Naive thymus-derived CD4-positive, alpha-beta T cell (primary cell): ENCODE measurements at regions of chr6 and their contacts with region 1.

Region 1: DNA sequence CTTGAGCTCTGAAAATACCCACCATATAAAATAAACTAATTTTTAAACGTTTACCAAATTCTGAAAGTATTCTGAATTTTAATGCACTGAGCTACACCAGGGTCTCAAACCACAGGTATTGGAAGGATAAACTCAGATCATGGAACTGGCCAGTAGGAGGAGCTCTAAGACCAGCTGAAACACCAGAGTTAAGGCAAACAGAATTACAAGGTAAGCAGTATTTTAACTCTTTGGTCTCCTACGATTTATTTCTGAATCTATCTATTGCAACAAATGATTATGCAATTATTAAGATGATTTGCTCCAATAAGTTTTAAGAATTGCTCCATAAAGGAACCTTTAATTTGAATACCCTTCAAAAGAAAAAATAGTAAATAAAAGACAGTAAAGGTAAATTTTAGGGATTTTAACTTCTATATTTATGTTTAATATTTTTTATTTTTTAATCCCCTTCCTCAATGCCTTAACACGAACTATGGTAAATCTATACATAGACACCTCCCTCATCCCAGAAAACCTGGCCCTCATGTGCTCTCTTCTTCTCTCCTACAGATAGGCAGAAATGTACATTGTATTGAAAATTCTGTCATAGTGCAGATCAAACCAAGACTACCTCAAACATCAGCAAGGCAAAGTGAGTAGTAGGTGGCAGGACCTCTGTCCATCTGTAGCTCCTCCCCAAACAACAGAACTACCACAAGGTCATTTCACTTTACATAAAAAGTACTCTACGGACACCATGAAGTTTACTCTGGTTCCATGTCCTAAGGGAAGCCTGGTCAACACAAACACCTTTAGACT is 58.4 kb downstream of the SMLR1 start:
- DNase-seq: peak; percentile 27 to 82 (median 73)
- ATAC-seq: peak; percentile 97
- H3K4me3 ChIP-seq: no peak overlapping the region
- H3K4me3 Mint-ChIP-seq: no peak overlapping the region
- H3K27ac ChIP-seq: no peak overlapping the region
- H3K27ac Mint-ChIP-seq: peak overlapping the region in 1 of 9 donors; percentile 3
- H3K4me1 ChIP-seq: no peaks in the 10 kb centered on the region
- H3K4me1 Mint-ChIP-seq: no peaks in the 10 kb centered on the region
- H3K27me3 ChIP-seq: no peaks in the 10 kb centered on the region
- H3K27me3 Mint-ChIP-seq: no peaks in the 10 kb centered on the region

Region 2: GRCh38 chr6:131063028-131063763 is 177.6 kb after region 1 on chr6 and contains the start of gene EPB41L2:
- CTCF ChIA-PET with region 1: interaction called, 3 read pairs
- POLR2A ChIA-PET with region 1: no interaction called
- intact Hi-C with region 1: loop called in 1 of 2 experiments (anchors 2 kb)
- DNase-seq: peak; percentile 63 to 87 (median 73)
- ATAC-seq: peak; percentile 94
- H3K4me3 ChIP-seq: peak within 1 kb of the TSS; percentile 63
- H3K4me3 Mint-ChIP-seq: peak within 1 kb of the TSS; percentile 83 to 93 (median 90)
- H3K27ac ChIP-seq: peak within 1 kb of the TSS; percentile 67
- H3K27ac Mint-ChIP-seq: peak within 1 kb of the TSS; percentile 20 to 92 (median 77)
- H3K4me1 ChIP-seq: peaks cover 0 to 6% of the 10 kb centered on the region in 2 donors
- H3K4me1 Mint-ChIP-seq: peaks cover 8 to 27% (median 25%) of the 10 kb centered on the region in 7 donors
- H3K27me3 ChIP-seq: no peaks in the 10 kb centered on the region
- H3K27me3 Mint-ChIP-seq: peaks cover 0 to 35% (median 0%) of the 10 kb centered on the region in 5 donors
- total RNA-seq, gene EPB41L2: 10.3 to 26.9 (median 20.9) TPM

Region 3: DNA sequence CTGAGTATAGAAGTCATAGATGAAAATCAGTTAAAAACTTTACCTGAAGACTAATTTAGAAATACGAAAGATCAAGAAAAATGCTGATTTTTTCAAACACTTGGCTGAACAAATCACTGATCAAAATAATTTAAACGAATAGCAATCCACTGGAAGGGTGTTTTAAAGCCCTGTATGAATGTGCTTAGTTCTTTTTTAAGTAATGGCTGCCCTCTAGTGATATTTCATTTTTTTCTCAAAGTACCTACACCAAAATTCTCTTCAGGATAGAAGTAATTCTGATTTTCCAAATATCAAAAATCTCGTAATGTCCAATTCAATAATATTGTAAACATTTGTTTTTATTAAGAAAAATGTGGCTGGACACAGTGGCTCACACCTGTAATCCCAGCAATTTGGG is 282.2 kb after region 1 on chr6:
- CTCF ChIA-PET with region 1: interaction called, 3 read pairs
- POLR2A ChIA-PET with region 1: no interaction called
- intact Hi-C with region 1: loop called in 1 of 2 experiments (anchors 1 kb)
- DNase-seq: no peak
- ATAC-seq: no peak
- H3K4me3 ChIP-seq: no peak overlapping the region
- H3K4me3 Mint-ChIP-seq: no peak overlapping the region
- H3K27ac ChIP-seq: no peak overlapping the region
- H3K27ac Mint-ChIP-seq: no peak overlapping the region
- H3K4me1 ChIP-seq: no peaks in the 10 kb centered on the region
- H3K4me1 Mint-ChIP-seq: no peaks in the 10 kb centered on the region
- H3K27me3 ChIP-seq: no peaks in the 10 kb centered on the region
- H3K27me3 Mint-ChIP-seq: no peaks in the 10 kb centered on the region

Region 4: GRCh38 chr6:131303338-131303954 is 417.9 kb after region 1 on chr6:
- CTCF ChIA-PET with region 1: no interaction called
- POLR2A ChIA-PET with region 1: no interaction called
- intact Hi-C with region 1: loop called in 1 of 2 experiments (anchors 5 kb)
- DNase-seq: no peak
- ATAC-seq: no peak
- H3K4me3 ChIP-seq: no peak overlapping the region
- H3K4me3 Mint-ChIP-seq: no peak overlapping the region
- H3K27ac ChIP-seq: no peak overlapping the region
- H3K27ac Mint-ChIP-seq: peak overlapping the region in 6 of 9 donors; percentile 2 to 51 (median 28)
- H3K4me1 ChIP-seq: peaks cover 0 to 10% of the 10 kb centered on the region in 2 donors
- H3K4me1 Mint-ChIP-seq: peaks cover 0 to 40% (median 24%) of the 10 kb centered on the region in 7 donors
- H3K27me3 ChIP-seq: no peaks in the 10 kb centered on the region
- H3K27me3 Mint-ChIP-seq: no peaks in the 10 kb centered on the region

Region 5: GRCh38 chr6:131372535-131372934 is 486.9 kb after region 1 on chr6:
- CTCF ChIA-PET with region 1: no interaction called
- POLR2A ChIA-PET with region 1: no interaction called
- intact Hi-C with region 1: no loop called
- DNase-seq: no peak
- ATAC-seq: no peak
- H3K4me3 ChIP-seq: no peak overlapping the region
- H3K4me3 Mint-ChIP-seq: no peak overlapping the region
- H3K27ac ChIP-seq: no peak overlapping the region
- H3K27ac Mint-ChIP-seq: peak overlapping the region in 4 of 9 donors; percentile 1 to 71 (median 41)
- H3K4me1 ChIP-seq: no peaks in the 10 kb centered on the region
- H3K4me1 Mint-ChIP-seq: peaks cover 4 to 26% (median 16%) of the 10 kb centered on the region in 7 donors
- H3K27me3 ChIP-seq: no peaks in the 10 kb centered on the region
- H3K27me3 Mint-ChIP-seq: no peaks in the 10 kb centered on the region

Region 6: DNA sequence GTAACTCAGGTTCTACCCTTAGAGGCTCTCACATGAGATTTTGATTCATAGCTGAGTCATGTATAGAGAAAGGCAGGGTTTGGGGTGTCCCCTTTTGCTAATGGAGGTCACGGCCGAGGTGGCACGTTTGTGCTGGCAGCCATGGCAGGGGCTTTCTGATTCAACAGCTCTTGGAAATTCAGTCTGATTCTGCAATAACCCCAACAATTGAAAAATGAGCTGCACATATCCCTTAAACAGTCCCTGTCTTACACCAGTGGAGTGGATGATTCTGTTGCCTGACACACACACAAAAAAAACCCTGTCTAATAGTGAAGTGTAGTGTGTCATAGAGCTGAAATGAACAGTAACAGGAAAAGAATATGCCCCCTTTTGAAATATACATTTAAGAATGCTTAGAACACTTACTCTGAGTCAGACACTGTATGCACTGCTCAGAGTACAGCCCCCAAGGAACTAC is 647.0 kb after region 1 on chr6:
- CTCF ChIA-PET with region 1: interaction called, 38 read pairs
- POLR2A ChIA-PET with region 1: interaction called, 4 read pairs
- intact Hi-C with region 1: loop called (anchors 1 kb)
- DNase-seq: peak in 1 of 9 donors; percentile 34
- ATAC-seq: peak; percentile 31
- H3K4me3 ChIP-seq: no peak overlapping the region
- H3K4me3 Mint-ChIP-seq: peak overlapping the region in 4 of 10 donors; percentile 7 to 49 (median 24)
- H3K27ac ChIP-seq: peak overlapping the region; percentile 51
- H3K27ac Mint-ChIP-seq: peak overlapping the region; percentile 1 to 94 (median 85)
- H3K4me1 ChIP-seq: peaks cover 4 to 34% of the 10 kb centered on the region in 2 donors
- H3K4me1 Mint-ChIP-seq: peaks cover 31 to 71% (median 62%) of the 10 kb centered on the region in 7 donors
- H3K27me3 ChIP-seq: no peaks in the 10 kb centered on the region
- H3K27me3 Mint-ChIP-seq: peaks cover 0 to 23% (median 4%) of the 10 kb centered on the region in 5 donors

Region 7: GRCh38 chr6:131909408-131910218 is 1024.0 kb after region 1 on chr6:
- CTCF ChIA-PET with region 1: interaction called, 4 read pairs
- POLR2A ChIA-PET with region 1: no interaction called
- intact Hi-C with region 1: loop called (anchors 1 kb)
- DNase-seq: peak; percentile 23 to 72 (median 62)
- ATAC-seq: peak; percentile 95
- H3K4me3 ChIP-seq: no peak overlapping the region
- H3K4me3 Mint-ChIP-seq: peak overlapping the region in 4 of 10 donors; percentile 16 to 42 (median 36)
- H3K27ac ChIP-seq: no peak overlapping the region
- H3K27ac Mint-ChIP-seq: peak overlapping the region in 3 of 9 donors; percentile 2 to 22 (median 5)
- H3K4me1 ChIP-seq: peaks cover 0 to 5% of the 10 kb centered on the region in 2 donors
- H3K4me1 Mint-ChIP-seq: peaks cover 6 to 8% (median 8%) of the 10 kb centered on the region in 7 donors
- H3K27me3 ChIP-seq: peaks cover 0 to 4% of the 10 kb centered on the region in 2 donors
- H3K27me3 Mint-ChIP-seq: peaks cover 11 to 38% (median 32%) of the 10 kb centered on the region in 5 donors

Region 8: GRCh38 chr6:132279592-132280139 is 1394.1 kb after region 1 on chr6:
- CTCF ChIA-PET with region 1: no interaction called
- POLR2A ChIA-PET with region 1: no interaction called
- intact Hi-C with region 1: loop called in 1 of 2 experiments (anchors 10 kb)
- DNase-seq: peak; percentile 43 to 79 (median 71)
- ATAC-seq: peak; percentile 89
- H3K4me3 ChIP-seq: peak overlapping the region; percentile 63
- H3K4me3 Mint-ChIP-seq: peak overlapping the region in 9 of 10 donors; percentile 56 to 89 (median 84)
- H3K27ac ChIP-seq: no peak overlapping the region
- H3K27ac Mint-ChIP-seq: no peak overlapping the region
- H3K4me1 ChIP-seq: no peaks in the 10 kb centered on the region
- H3K4me1 Mint-ChIP-seq: no peaks in the 10 kb centered on the region
- H3K27me3 ChIP-seq: no peaks in the 10 kb centered on the region
- H3K27me3 Mint-ChIP-seq: peaks cover 19 to 38% (median 27%) of the 10 kb centered on the region in 5 donors